ENCODE measurements at regions of chr16 and their contacts with region 1.

Region 1: GRCh38 chr16:30429678-30430427 is at the start of gene DCTPP1:
- DNase-seq: peak; percentile 98 to 99
- H3K4me3 ChIP-seq: peak within 1 kb of the TSS; percentile 67
- H3K27ac ChIP-seq: peak within 1 kb of the TSS; percentile 3; the same call in 1 of the 2 replicates
- H3K4me1 ChIP-seq: peaks cover 12% of the 10 kb centered on the region
- H3K27me3 ChIP-seq: no peaks in the 10 kb centered on the region
- CTCF ChIP-seq: peak; percentile 91
- total RNA-seq, gene DCTPP1: 80.4 and 109 TPM in 2 replicates

Region 2: GRCh38 chr16:30491744-30492308 is 62.0 kb after region 1 on chr16:
- CTCF ChIA-PET with region 1: interaction called, 4 read pairs
- POLR2A ChIA-PET with region 1: no interaction called
- intact Hi-C with region 1: loop called (anchors 2 kb)
- DNase-seq: peak; percentile 86 to 90
- H3K4me3 ChIP-seq: no peak overlapping the region
- H3K27ac ChIP-seq: no peak overlapping the region
- H3K4me1 ChIP-seq: peaks cover 15% of the 10 kb centered on the region
- H3K27me3 ChIP-seq: no peaks in the 10 kb centered on the region
- CTCF ChIP-seq: no peak

Region 3: DNA sequence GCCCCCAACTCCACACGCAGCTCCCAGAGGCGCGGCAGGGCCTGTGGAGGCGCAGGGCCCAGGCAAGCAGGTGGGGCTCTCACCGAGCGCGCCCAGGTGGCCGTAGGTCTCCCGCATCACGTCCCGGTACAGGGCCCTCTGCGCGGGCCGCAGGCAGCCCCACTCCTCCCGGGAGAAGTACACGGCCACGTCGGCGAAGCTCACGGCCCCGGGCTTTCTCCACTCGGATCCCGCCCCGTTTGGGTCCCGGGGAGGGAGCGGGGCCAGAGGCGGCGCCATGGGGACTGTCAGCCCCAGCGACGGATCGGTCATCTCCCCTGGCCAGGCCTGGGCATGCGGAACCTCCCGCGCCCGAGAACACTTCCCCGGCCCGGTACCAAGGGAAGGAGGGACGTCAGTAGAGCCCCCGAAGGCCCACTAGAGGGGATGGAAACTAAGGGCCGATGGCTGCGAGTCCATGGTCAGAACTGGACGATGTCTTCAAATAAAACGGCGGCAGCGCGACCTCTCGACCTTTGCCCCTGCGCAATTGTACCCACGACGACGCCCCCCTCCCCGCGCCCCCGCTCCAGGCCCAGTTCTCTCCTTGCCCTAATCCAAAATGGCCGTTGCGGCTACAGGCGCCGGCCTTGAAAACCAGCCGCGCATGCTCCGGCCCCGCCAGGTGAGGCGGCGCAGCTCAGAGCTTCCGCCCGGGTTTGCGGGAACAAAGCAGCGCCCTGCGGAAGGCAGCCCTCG is 104.7 kb after region 1 on chr16 and contains the start of gene ZNF747:
- CTCF ChIA-PET with region 1: interaction called, 20 read pairs
- POLR2A ChIA-PET with region 1: no interaction called
- intact Hi-C with region 1: loop called (anchors 1 kb)
- DNase-seq: peak; percentile 72 to 92
- H3K4me3 ChIP-seq: peak within 1 kb of the TSS; percentile 73
- H3K27ac ChIP-seq: peak within 1 kb of the TSS; percentile 57
- H3K4me1 ChIP-seq: peaks cover 30% of the 10 kb centered on the region
- H3K27me3 ChIP-seq: no peaks in the 10 kb centered on the region
- CTCF ChIP-seq: peak; percentile 29; the same call in 1 of the 2 replicates
- total RNA-seq, gene ZNF747: 14.5 and 17.9 TPM in 2 replicates

Region 4: GRCh38 chr16:30628627-30629540 is 199.0 kb after region 1 on chr16:
- CTCF ChIA-PET with region 1: interaction called, 14 read pairs
- POLR2A ChIA-PET with region 1: interaction called, 31 read pairs
- intact Hi-C with region 1: loop called (anchors 1 kb)
- DNase-seq: peak; percentile 60 to 89
- H3K4me3 ChIP-seq: peak overlapping the region; percentile 33; the same call in 1 of the 2 replicates
- H3K27ac ChIP-seq: no peak overlapping the region
- H3K4me1 ChIP-seq: peaks cover 10% of the 10 kb centered on the region; the same call in 1 of the 2 replicates
- H3K27me3 ChIP-seq: no peaks in the 10 kb centered on the region
- CTCF ChIP-seq: peak; percentile 96

Region 5: DNA sequence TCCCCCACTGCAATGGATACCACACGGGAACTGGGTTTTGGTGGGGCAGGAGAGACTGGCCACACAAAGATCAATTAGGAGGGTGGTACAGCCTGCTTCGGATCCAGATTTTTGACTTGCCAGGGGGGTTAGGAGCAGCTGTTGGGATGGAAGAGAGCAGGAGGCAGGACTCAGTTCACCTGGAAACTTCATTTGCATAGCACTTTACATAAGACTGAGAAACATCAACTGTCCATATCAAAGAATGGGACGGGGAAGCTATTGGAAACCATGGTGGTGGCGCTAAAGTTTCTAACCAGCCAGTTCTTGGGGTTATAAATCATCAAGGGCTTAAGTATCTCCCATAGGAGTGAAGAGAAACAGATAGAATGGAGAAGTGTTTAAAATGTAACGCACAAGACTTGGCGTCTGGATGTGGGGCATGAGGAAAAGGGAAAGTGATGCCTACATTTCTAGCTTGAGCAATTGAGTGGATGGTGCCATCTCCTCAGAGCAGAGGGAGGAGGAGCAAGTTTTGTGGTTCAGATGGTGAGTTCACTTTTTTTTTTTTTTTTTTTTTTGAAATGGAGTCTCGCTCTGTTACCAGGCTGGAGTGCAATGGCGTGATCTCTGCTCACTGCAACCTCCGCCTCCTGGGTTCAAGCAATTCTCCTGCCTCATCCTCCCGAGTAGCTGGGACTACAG is 262.7 kb after region 1 on chr16:
- CTCF ChIA-PET with region 1: no interaction called
- POLR2A ChIA-PET with region 1: no interaction called
- intact Hi-C with region 1: loop called (anchors 1 kb)
- DNase-seq: no peak
- H3K4me3 ChIP-seq: no peak overlapping the region
- H3K27ac ChIP-seq: no peak overlapping the region
- H3K4me1 ChIP-seq: peaks cover 8% of the 10 kb centered on the region
- H3K27me3 ChIP-seq: no peaks in the 10 kb centered on the region
- CTCF ChIP-seq: no peak

Region 6: GRCh38 chr16:30813821-30814189 is 384.0 kb after region 1 on chr16:
- CTCF ChIA-PET with region 1: interaction called, 10 read pairs
- POLR2A ChIA-PET with region 1: no interaction called
- intact Hi-C with region 1: no loop called
- DNase-seq: no peak
- H3K4me3 ChIP-seq: peak overlapping the region; percentile 53
- H3K27ac ChIP-seq: peak overlapping the region; percentile 16; the same call in 1 of the 2 replicates
- H3K4me1 ChIP-seq: peaks cover 9% of the 10 kb centered on the region
- H3K27me3 ChIP-seq: no peaks in the 10 kb centered on the region
- CTCF ChIP-seq: no peak

Measured in PC-9 (cell line).